ENCODE measurements at regions of chr15 and their contacts with region 1.

Region 1: GRCh38 chr15:98787936-98788757 is 139.8 kb downstream of the IGF1R start:
- DNase-seq: peak in 2 of 3 donors; percentile 50 to 71
- H3K4me3 ChIP-seq: no peak overlapping the region
- H3K27ac ChIP-seq: no peak overlapping the region
- H3K4me1 ChIP-seq: peaks cover 8 to 22% (median 18%) of the 10 kb centered on the region in 4 experiments
- H3K27me3 ChIP-seq: no peaks in the 10 kb centered on the region

Region 2: GRCh38 chr15:98799461-98800390 is 11.6 kb after region 1 on chr15:
- CTCF ChIA-PET with region 1: interaction called, 11 read pairs
- POLR2A ChIA-PET with region 1: no interaction called
- DNase-seq: peak in 2 of 3 donors; percentile 35 to 55
- H3K4me3 ChIP-seq: peak overlapping the region in 2 of 7 experiments; percentile 14 to 55
- H3K27ac ChIP-seq: no peak overlapping the region
- H3K4me1 ChIP-seq: peaks cover 10 to 41% (median 29%) of the 10 kb centered on the region in 4 experiments
- H3K27me3 ChIP-seq: no peaks in the 10 kb centered on the region

Region 3: GRCh38 chr15:98805434-98806274 is 17.5 kb after region 1 on chr15:
- CTCF ChIA-PET with region 1: interaction called, 13 read pairs
- POLR2A ChIA-PET with region 1: no interaction called
- DNase-seq: peak in 2 of 3 donors; percentile 19 to 27
- H3K4me3 ChIP-seq: no peak overlapping the region
- H3K27ac ChIP-seq: no peak overlapping the region
- H3K4me1 ChIP-seq: peaks cover 8 to 18% (median 13%) of the 10 kb centered on the region in 4 experiments
- H3K27me3 ChIP-seq: no peaks in the 10 kb centered on the region